Activated CD4-positive, alpha-beta memory T cell treated with anti-CD3 and anti-CD28 coated beads for 36 hours (primary cell): ENCODE measurements at regions of chr22 and their contacts with region 1.

Region 1: GRCh38 chr22:50326959-50327710 is at the start of gene DENND6B:
- DNase-seq: peak; percentile 74
- H3K4me3 Mint-ChIP-seq: peak within 1 kb of the TSS; percentile 73
- H3K27ac Mint-ChIP-seq: no peak within 1 kb of the TSS
- H3K4me1 Mint-ChIP-seq: peaks cover 10% of the 10 kb centered on the region
- H3K27me3 Mint-ChIP-seq: peaks cover 7% of the 10 kb centered on the region
- total RNA-seq, gene DENND6B: 3.5 to 3.6 TPM

Region 2: DNA sequence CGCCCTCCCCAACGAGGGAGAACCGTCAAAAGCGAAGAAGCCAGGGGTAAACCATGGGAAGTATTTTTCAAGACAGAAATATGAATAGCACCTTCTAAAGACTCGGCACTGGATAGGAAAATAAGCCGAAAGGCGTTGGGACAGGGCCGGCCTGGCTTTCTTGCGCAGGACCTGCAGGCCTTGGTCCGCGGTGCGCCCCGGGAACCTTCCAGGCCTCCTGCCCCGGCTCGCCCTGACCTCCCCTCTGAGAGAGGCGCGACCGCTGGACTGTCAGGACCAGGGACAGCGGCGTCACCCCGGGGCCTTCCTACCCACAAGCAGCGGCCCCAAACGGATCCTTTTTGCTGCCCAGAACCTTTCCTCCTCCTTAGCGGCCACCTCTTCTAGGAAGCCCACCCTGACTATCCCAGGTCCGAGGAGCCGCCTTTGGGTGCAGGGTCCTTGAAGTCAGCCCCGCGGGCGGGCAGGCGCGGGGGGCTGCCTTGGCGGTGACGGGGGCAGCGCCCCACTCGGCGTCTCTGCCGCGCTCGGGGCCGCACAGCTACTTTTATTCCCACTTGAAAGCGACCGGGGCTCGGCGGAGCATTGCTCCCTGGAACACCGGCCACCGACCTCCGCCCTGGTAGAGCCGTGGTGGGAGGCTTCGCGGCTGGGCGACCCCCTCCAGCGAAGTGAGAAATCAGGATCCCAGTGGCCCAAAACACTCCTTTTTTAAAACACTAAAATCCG is 56.3 kb before region 1 on chr22:
- CTCF ChIA-PET with region 1: interaction called, 14 read pairs
- POLR2A ChIA-PET with region 1: no interaction called
- intact Hi-C with region 1: loop called (anchors 1 kb)
- DNase-seq: peak; percentile 81
- H3K4me3 Mint-ChIP-seq: peak overlapping the region; percentile 64
- H3K27ac Mint-ChIP-seq: no peak overlapping the region
- H3K4me1 Mint-ChIP-seq: peaks cover 8% of the 10 kb centered on the region
- H3K27me3 Mint-ChIP-seq: no peaks in the 10 kb centered on the region

Region 3: DNA sequence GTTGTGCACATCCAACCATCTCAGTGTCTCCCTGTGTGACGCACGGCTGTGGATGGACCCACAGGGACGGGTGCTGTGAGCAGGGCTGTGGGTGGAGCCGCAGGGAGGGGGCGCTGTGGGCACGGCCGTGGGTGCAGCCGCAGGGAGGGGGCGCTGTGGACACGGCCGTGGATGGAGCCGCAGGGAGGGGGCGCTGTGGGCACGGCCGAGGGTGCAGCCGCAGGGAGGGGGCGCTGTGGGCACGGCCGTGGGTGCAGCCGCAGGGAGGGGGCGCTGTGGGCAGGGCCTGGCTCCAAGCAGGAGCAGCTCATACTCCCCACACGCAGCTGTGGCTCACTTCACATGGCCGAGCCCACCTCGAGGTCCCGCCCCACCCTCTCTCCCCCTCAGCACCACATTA is 51.0 kb before region 1 on chr22:
- CTCF ChIA-PET with region 1: interaction called, 14 read pairs
- POLR2A ChIA-PET with region 1: no interaction called
- intact Hi-C with region 1: loop called (anchors 1 kb)
- DNase-seq: peak; percentile 78
- H3K4me3 Mint-ChIP-seq: no peak overlapping the region
- H3K27ac Mint-ChIP-seq: no peak overlapping the region
- H3K4me1 Mint-ChIP-seq: no peaks in the 10 kb centered on the region
- H3K27me3 Mint-ChIP-seq: no peaks in the 10 kb centered on the region

Region 4: DNA sequence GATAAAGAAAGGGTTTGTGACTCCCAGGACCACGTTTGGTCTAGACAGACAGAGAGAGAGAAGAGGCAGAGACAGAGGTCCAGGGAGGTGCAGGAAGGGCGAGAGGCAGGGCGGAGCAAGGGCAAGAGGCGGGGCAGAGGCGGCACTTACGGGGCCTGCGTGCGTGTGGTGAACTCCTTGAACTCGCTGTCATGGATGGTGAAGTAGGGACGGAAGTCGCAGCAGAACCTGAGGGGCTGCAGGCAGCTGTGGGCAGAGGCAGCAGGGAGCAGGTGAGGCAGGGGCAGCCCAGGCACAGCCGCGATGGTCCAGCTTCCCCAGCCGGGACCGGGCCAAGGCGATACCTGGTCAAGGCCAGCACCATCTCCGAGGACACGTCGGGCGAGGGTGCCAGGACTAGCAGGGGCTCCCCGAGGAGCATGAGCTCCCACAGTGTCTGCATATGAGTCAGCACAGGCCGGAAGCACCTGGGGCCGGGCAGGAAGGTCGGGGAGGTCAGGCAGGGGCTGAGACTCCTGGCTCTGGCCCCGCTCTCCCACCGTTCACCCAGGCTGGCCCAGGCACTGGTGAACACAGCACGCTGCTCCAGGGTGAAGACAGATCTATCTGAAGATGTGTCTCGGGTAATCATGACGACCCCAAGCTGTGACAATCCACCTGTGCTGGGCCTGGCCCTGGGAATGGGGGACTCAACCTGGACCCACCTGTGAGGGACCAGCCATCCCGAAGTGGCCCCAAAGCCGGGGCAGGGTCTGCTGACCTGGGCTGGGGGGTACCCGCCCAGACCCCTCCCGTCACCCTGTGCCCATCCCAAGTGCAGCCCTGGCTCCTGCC is 12.5 kb before region 1 on chr22:
- CTCF ChIA-PET with region 1: interaction called, 12 read pairs
- POLR2A ChIA-PET with region 1: no interaction called
- intact Hi-C with region 1: no loop called
- DNase-seq: peak; percentile 89
- H3K4me3 Mint-ChIP-seq: peak overlapping the region; percentile 73
- H3K27ac Mint-ChIP-seq: peak overlapping the region; percentile 75
- H3K4me1 Mint-ChIP-seq: peaks cover 11% of the 10 kb centered on the region
- H3K27me3 Mint-ChIP-seq: no peaks in the 10 kb centered on the region

Region 5: DNA sequence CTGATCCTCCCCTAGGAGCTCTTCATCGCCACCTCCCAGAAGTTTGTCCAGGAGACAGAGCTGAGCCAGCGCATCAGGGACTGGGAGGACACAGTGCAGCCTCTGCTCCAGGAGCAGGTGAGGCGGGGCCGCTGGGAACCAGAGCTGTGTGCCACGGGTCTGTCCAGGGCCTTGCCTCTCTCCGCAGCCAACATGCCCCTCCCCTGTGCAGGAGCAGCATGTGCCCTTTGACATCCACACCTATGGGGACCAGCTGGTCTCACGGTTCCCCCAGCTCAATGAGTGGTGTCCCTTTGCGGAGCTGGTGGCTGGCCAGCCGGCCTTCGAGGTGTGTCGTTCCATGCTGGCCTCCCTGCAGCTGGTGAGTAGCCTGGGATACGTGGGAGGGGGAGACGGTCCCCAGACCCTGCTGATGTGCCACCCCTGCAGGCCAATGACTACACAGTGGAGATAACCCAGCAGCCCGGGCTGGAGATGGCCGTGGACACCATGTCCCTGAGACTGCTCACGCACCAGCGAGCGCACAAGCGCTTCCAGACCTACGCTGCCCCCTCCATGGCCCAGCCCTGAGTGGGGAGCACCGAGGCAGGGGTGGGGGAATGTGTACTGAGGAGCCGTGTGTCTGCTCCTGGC is 195.8 kb after region 1 on chr22:
- CTCF ChIA-PET with region 1: no interaction called
- POLR2A ChIA-PET with region 1: no interaction called
- intact Hi-C with region 1: no loop called
- DNase-seq: no peak
- H3K4me3 Mint-ChIP-seq: peak overlapping the region; percentile 2
- H3K27ac Mint-ChIP-seq: no peak overlapping the region
- H3K4me1 Mint-ChIP-seq: peaks cover 28% of the 10 kb centered on the region
- H3K27me3 Mint-ChIP-seq: no peaks in the 10 kb centered on the region

Region 6: GRCh38 chr22:50627642-50628542 is 300.8 kb after region 1 on chr22 and contains the start of gene ARSA:
- CTCF ChIA-PET with region 1: no interaction called
- POLR2A ChIA-PET with region 1: no interaction called
- intact Hi-C with region 1: no loop called
- DNase-seq: peak; percentile 85
- H3K4me3 Mint-ChIP-seq: peak within 1 kb of the TSS; percentile 88
- H3K27ac Mint-ChIP-seq: peak within 1 kb of the TSS; percentile 69
- H3K4me1 Mint-ChIP-seq: peaks cover 21% of the 10 kb centered on the region
- H3K27me3 Mint-ChIP-seq: no peaks in the 10 kb centered on the region
- total RNA-seq, gene ARSA: 23.9 to 25.8 TPM